Activated B cell treated with CpG ODN at 0.5 μM for 24 hours (primary cell): ENCODE measurements at regions of chr7 and their contacts with region 1.

Region 1: DNA sequence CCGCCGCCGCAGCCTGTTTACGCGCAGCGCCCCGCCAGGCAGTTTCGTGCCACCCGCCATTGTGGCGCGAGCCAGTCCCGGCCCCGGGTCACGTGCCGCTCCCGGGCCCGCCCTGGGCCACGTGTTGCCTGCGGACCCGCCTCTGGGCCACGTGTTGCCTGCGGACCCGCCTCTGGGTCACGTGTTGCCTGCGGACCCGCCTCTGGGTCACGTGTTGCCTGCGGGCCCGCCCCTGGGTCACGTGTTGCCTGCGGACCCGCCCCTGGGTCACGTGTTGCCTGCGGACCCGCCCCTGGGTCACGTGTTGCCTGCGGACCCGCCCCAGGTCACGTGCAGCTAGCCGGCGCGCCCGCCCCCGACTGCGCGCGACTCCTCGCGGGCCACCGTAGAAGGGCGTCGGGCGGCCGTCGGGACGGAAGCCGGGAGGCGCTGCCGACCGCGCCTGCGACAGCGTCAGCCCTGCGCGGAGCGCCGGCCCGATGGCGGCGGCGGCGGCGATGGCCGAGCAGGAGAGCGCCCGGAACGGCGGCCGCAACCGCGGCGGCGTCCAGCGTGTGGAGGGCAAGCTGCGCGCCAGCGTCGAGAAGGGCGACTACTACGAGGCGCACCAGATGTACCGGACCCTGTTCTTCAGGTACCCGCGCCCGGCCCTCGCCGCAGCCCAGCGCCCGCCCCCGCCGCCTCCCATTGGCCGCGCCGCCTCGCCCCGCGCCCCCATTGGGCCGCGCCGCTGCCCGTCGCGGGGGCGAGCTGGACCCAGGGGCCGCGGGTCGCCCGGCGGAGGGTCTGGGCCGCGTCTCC is at the start of gene GET4:
- DNase-seq: peak; percentile 98
- ATAC-seq: peak; percentile 79
- H3K4me3 Mint-ChIP-seq: peak within 1 kb of the TSS; percentile 91
- H3K27ac Mint-ChIP-seq: peak within 1 kb of the TSS; percentile 87
- H3K4me1 Mint-ChIP-seq: peaks cover 35% of the 10 kb centered on the region
- H3K27me3 Mint-ChIP-seq: no peaks in the 10 kb centered on the region
- CTCF ChIP-seq: no peak
- total RNA-seq, gene GET4: 40.5 and 41.4 TPM in 2 replicates

Region 2: DNA sequence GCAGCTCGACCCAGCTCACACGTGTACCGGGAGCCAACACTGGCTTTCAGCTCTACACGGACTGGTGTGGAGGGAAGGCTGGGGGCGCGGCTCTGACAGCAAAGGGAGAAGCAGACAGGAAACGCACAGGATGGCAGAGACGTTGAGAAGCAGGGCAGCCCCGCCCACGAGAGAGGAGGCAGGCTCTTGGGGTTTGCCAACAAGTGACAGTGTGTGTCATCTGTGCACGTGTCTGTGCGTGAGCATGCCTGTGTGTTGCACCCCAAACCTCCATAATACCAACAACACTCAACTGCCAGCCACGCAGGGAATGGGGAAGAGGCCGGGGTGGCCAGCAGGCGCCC is 292.3 kb before region 1 on chr7:
- CTCF ChIA-PET with region 1: no interaction called
- POLR2A ChIA-PET with region 1: no interaction called
- intact Hi-C with region 1: no loop called
- DNase-seq: no peak
- ATAC-seq: peak; percentile 51
- H3K4me3 Mint-ChIP-seq: no peak overlapping the region
- H3K27ac Mint-ChIP-seq: no peak overlapping the region
- H3K4me1 Mint-ChIP-seq: peaks cover 16% of the 10 kb centered on the region
- H3K27me3 Mint-ChIP-seq: no peaks in the 10 kb centered on the region
- CTCF ChIP-seq: no peak

Region 3: DNA sequence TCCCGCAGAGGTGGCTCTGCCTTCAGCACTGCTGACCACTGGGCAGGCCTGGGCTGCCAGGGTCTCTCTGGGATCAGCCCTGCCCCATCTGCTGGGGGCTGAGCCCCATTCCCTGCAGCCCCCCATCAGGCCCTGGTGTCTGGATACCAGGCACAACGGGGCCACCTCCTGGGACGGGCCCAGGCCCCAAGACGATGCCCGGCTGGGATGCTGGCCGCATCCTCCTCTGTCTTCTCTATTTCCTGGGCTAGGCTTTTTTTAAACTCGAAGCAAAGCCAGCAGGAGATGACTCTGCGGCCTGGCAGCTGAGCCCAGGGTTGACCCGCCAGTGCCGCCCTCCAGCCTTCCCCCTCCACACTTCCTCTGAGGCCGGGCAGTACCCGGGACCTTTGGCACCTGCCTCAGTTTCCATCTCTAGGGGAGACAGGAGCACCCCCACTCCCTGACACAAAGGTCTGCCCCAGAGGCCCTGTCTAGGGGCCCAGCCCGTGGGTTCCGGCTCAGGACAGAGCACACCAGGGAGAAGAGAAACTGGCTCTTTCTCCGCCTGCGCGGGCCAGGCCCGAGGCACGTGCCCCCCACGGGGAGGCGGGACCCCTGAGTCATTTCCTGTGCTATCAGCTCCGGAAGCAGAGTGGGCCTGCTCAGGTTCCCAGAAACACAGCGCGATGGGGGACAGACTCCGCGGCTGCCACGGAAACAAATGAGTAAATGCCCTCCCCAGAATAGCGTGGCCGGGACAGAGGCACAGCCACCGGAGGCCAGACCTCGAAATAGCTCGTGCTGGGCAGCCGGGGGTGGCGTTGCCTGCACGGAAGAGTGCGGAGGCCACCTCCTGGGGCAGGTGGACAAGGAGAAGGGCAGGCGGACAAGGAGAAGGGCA is 272.1 kb before region 1 on chr7:
- CTCF ChIA-PET with region 1: no interaction called
- POLR2A ChIA-PET with region 1: interaction called, 4 read pairs
- intact Hi-C with region 1: loop called (anchors 1 kb)
- DNase-seq: peak; percentile 81
- ATAC-seq: peak; percentile 71
- H3K4me3 Mint-ChIP-seq: peak overlapping the region; percentile 83
- H3K27ac Mint-ChIP-seq: peak overlapping the region; percentile 98
- H3K4me1 Mint-ChIP-seq: peaks cover 63% of the 10 kb centered on the region
- H3K27me3 Mint-ChIP-seq: no peaks in the 10 kb centered on the region
- CTCF ChIP-seq: no peak

Region 4: GRCh38 chr7:816300-816750 is 60.0 kb before region 1 on chr7:
- CTCF ChIA-PET with region 1: interaction called, 6 read pairs
- POLR2A ChIA-PET with region 1: interaction called, 17 read pairs
- intact Hi-C with region 1: loop called (anchors 1 kb)
- DNase-seq: peak; percentile 94
- ATAC-seq: peak; percentile 92
- H3K4me3 Mint-ChIP-seq: peak overlapping the region; percentile 81
- H3K27ac Mint-ChIP-seq: no peak overlapping the region
- H3K4me1 Mint-ChIP-seq: peaks cover 64% of the 10 kb centered on the region
- H3K27me3 Mint-ChIP-seq: no peaks in the 10 kb centered on the region
- CTCF ChIP-seq: no peak

Region 5: GRCh38 chr7:923108-924041 is 47.0 kb after region 1 on chr7:
- CTCF ChIA-PET with region 1: no interaction called
- POLR2A ChIA-PET with region 1: interaction called, 3 read pairs
- intact Hi-C with region 1: loop called (anchors 1 kb)
- DNase-seq: peak; percentile 72
- ATAC-seq: peak; percentile 85
- H3K4me3 Mint-ChIP-seq: peak overlapping the region; percentile 77
- H3K27ac Mint-ChIP-seq: peak overlapping the region; percentile 84
- H3K4me1 Mint-ChIP-seq: peaks cover 42% of the 10 kb centered on the region
- H3K27me3 Mint-ChIP-seq: no peaks in the 10 kb centered on the region
- CTCF ChIP-seq: no peak

Region 6: GRCh38 chr7:985915-986741 is 109.8 kb after region 1 on chr7:
- CTCF ChIA-PET with region 1: no interaction called
- POLR2A ChIA-PET with region 1: no interaction called
- intact Hi-C with region 1: no loop called
- DNase-seq: no peak
- ATAC-seq: no peak
- H3K4me3 Mint-ChIP-seq: no peak overlapping the region
- H3K27ac Mint-ChIP-seq: no peak overlapping the region
- H3K4me1 Mint-ChIP-seq: no peaks in the 10 kb centered on the region
- H3K27me3 Mint-ChIP-seq: peaks cover 4% of the 10 kb centered on the region
- CTCF ChIP-seq: no peak

Region 7: DNA sequence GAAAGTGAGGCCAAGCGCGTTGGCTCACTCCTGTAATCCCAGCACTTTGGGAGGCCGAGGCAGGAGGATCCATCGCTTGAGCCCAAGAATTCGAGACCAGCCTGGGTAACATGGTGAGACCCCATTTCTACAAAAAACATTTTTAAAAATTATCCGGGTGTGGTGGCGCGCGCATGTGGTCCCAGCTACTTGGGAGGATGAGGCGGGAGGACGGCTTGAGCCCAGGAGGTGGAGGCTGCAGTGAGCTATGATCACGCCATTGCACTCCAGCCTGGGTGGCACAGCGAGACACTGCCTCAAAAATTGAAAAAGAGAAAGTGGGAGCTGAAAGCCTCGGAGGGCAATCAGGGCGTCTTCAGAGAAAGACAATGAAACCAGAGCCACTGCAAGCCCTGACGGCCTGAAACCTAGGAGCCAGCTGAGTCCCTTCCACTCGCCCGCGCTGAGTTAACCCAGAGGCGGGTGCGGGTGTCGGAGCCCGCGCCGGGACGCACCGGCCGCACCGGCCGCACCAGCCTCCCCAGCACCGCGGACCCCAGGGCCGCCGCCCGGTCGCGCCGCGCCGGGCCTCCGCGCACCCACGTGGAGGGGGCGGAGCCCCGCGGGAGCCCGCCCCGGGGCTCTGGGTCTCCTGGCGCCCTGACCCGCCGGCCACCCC is 261.3 kb after region 1 on chr7:
- CTCF ChIA-PET with region 1: no interaction called
- POLR2A ChIA-PET with region 1: interaction called, 3 read pairs
- intact Hi-C with region 1: loop called (anchors 5 kb)
- DNase-seq: no peak
- ATAC-seq: peak; percentile 62
- H3K4me3 Mint-ChIP-seq: peak overlapping the region; percentile 86
- H3K27ac Mint-ChIP-seq: peak overlapping the region; percentile 70
- H3K4me1 Mint-ChIP-seq: peaks cover 52% of the 10 kb centered on the region
- H3K27me3 Mint-ChIP-seq: no peaks in the 10 kb centered on the region
- CTCF ChIP-seq: no peak